Prostate gland (tissue), 2 donors: ENCODE measurements at regions of chr19 and their contacts with region 1.

Region 1: DNA sequence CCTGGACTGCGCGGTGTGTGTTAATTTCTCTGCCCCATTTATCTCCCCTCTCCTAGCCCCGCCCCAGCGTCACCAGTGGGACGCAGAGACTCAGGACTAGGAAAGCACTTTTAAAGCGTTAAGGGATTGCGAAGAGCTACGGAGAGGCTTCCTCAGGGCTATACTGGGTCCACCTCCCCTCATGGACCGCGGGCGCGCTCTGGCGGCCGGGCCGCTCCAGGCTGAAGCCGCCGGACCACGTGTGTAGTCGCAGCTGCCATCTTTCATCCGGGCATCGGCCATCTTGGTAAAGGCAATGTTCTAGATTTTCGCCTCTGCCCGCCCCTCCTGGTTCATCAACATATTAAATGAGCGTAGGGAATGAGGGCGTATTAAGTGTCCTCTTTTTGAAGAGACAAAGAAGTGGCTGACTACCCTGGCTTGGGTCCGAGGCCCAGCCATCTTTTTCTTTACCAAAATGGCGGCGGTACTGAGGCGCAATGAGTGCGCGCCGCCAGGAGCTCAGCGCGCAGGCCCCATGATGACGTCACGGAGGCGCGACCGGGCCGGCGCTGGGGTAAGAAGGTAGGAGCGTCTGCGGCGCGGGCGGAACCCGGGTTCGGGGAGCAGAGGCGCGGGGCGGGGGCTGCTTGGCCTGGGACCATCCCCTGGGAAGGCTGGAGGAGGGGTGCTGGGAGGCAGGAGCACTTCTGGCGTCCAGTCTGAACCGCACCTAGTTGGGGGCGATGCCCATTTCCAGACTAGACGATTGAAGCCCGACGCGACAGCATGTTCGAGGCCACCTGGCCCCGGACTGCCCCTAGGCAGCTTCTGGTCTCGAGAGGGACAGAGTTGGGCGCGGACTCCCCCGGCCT is at the start of gene CCDC124:
- DNase-seq: peak; percentile 87
- H3K4me3 ChIP-seq: peak within 1 kb of the TSS; percentile 83 to 86
- H3K27ac ChIP-seq: peak within 1 kb of the TSS; percentile 88 to 91
- H3K4me1 ChIP-seq: peaks cover 9% of the 10 kb centered on the region
- H3K27me3 ChIP-seq: no peaks in the 10 kb centered on the region
- CTCF ChIP-seq: peak; percentile 70 to 97 (median 93)
- POLR2A ChIP-seq: peak; percentile 78
- total RNA-seq, gene CCDC124: 48.7 to 52.2 TPM

Region 2: DNA sequence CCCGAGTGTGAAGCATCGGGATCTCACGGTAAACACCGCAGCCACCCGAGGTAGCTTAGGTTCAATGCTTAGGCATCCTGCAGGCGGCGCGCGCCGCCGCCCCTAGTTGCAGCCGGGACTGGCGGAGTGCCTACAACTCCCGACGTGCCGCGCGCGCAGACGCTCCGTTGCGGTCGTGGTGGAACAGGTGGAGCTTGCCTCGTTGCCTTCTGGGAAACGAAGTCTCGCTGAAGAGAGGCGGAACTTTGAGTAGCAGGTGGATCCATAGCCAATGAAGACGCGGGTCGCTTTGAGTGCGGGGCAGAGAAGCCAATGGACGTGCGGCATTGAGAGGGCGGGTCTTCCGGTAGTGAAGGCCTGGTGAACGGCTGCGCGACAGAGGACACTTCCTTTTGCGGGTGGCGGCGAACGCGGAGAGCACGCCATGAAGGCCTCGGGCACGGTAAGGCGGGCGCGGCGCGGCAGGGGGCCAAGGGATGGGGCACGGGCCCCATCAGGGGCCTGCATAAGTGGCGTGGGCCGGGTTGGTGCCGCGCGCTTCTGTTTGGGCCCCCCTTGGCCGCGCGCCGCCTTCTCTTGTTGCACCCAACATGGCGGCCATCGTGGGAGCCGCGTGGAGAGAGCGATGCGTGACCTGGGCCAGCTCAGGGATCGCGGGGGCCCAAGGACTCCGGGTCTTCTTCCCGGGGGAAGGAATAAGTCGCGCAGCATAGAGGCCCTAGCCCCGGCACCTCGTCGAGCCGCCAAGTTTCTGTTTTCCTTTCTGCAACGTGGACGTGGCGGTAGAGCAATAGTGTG is 73.0 kb before region 1 on chr19 and contains the start of gene RPL18A:
- intact Hi-C with region 1: loop called (anchors 2 kb)
- DNase-seq: peak; percentile 99
- H3K4me3 ChIP-seq: peak within 1 kb of the TSS; percentile 53 to 92
- H3K27ac ChIP-seq: peak within 1 kb of the TSS; percentile 69 to 85
- H3K4me1 ChIP-seq: peaks cover 6% of the 10 kb centered on the region
- H3K27me3 ChIP-seq: no peaks in the 10 kb centered on the region
- CTCF ChIP-seq: peak; percentile 77 to 98 (median 92)
- POLR2A ChIP-seq: peak; percentile 86
- total RNA-seq, gene RPL18A: 1,351 to 1,892 TPM

Region 3: GRCh38 chr19:17996826-17997316 is 64.2 kb after region 1 on chr19:
- intact Hi-C with region 1: loop called (anchors 2 kb)
- DNase-seq: peak; percentile 81
- H3K4me3 ChIP-seq: no peak overlapping the region
- H3K27ac ChIP-seq: no peak overlapping the region
- H3K4me1 ChIP-seq: no peaks in the 10 kb centered on the region
- H3K27me3 ChIP-seq: no peaks in the 10 kb centered on the region
- CTCF ChIP-seq: peak; percentile 88 to 98 (median 97)
- POLR2A ChIP-seq: no peak